ENCODE measurements at regions of chr2 and their contacts with region 1.

Region 1: GRCh38 chr2:17830053-17831034 is 14.1 kb downstream of the MSGN1 start:
- DNase-seq: peak; percentile 76
- ATAC-seq: peak; percentile 91
- H3K4me3 ChIP-seq: peak overlapping the region in 4 of 5 experiments; percentile 13 to 59 (median 33)
- H3K4me3 Mint-ChIP-seq: peak overlapping the region; percentile 70
- H3K27ac ChIP-seq: no peak overlapping the region
- H3K27ac Mint-ChIP-seq: peak overlapping the region; percentile 50
- H3K4me1 ChIP-seq: peaks cover 17 to 20% of the 10 kb centered on the region in 2 donors
- H3K4me1 Mint-ChIP-seq: peaks cover 34% of the 10 kb centered on the region
- H3K27me3 ChIP-seq: peaks cover 0 to 3% (median 0%) of the 10 kb centered on the region in 4 experiments
- H3K27me3 Mint-ChIP-seq: no peaks in the 10 kb centered on the region
- CTCF ChIP-seq: peak; percentile 97

Region 2: DNA sequence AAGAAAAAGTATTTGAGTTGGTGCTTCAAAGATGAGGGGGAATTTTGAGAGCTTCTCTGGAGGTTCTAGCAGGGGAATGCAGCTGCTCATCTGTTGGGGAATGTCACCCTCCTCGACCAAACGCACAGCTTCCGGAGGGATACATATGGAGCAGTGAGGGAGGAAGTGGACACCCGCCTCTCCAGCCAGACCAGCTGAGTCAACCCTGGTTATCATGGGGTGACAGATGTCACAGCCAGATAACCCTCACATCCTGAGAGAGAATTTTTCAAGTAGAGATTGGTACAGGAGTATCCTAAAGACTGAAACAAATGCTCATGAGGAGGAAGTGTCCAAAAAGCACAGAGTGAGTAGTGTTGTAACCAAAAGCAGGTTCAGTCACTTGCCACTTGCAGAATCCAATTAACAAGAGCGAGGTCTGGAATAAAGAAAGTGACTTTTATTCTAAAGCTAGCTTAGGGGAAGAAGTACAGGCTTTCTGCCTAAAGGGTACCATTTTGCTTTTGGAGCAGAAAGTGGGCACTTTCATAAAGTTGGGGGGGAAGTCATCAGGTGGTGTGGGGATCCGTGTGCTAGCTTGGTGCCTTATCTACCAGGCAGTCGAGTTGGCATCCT is 707.4 kb before region 1 on chr2:
- CTCF ChIA-PET with region 1: no interaction called
- POLR2A ChIA-PET with region 1: no interaction called
- intact Hi-C with region 1: loop called (anchors 10 kb)
- DNase-seq: no peak
- ATAC-seq: peak; percentile 39
- H3K4me3 ChIP-seq: no peak overlapping the region
- H3K4me3 Mint-ChIP-seq: no peak overlapping the region
- H3K27ac ChIP-seq: no peak overlapping the region
- H3K27ac Mint-ChIP-seq: peak overlapping the region; percentile 57
- H3K4me1 ChIP-seq: peaks cover 32 to 38% of the 10 kb centered on the region in 2 donors
- H3K4me1 Mint-ChIP-seq: peaks cover 6% of the 10 kb centered on the region
- H3K27me3 ChIP-seq: no peaks in the 10 kb centered on the region
- H3K27me3 Mint-ChIP-seq: no peaks in the 10 kb centered on the region
- CTCF ChIP-seq: no peak

Region 3: DNA sequence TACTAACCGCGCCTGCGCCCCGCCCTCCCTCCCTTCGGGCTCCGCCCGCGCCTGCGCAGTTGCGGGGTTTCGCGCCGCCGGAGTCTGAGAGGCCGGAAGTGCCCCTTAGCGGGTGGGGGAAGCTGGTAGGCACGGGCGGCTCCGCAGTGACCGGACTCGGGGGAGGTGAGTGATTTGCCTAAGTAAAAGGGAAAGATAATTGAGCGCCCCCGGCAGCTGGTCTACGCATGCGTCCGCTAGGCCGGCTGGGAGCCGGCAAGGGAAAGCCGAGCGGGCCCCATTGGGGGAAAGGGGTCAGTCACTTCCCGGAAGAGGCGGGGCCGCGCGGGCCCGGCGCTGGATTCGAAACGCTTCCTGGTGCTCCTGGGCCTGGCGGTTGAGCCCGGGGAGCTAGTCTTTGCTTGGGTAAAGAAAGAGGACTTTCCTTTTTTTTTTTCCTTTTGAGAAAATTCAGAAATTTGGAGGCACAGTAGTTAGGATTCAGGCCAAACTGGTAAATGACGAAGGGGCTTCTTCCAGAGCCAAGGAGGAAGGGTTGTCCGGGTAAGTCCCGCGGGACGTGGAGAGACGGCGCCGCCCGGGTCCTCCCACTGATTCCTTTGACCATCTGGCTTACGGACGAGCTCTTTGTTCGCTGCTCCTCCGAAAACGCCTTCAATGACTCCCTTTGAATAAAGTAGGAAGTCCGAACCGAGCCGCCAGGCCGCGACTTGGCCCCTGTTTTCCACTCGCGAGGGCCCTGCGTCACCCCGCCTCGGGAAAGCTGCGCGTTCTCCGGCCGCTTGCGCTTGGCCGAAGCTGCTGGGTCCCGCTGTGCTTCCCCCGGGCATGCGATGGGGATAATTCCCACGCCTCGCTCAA is 76.3 kb before region 1 on chr2 and contains the starts of genes GEN1 and SMC6:
- CTCF ChIA-PET with region 1: interaction called, 8 read pairs
- POLR2A ChIA-PET with region 1: no interaction called
- intact Hi-C with region 1: loop called (anchors 1 kb)
- DNase-seq: peak; percentile 97
- ATAC-seq: peak; percentile 80
- H3K4me3 ChIP-seq: peak within 1 kb of the TSS; percentile 86 to 93 (median 92)
- H3K4me3 Mint-ChIP-seq: peak within 1 kb of the TSS; percentile 81
- H3K27ac ChIP-seq: peak within 1 kb of the TSS; percentile 94 to 96
- H3K27ac Mint-ChIP-seq: peak within 1 kb of the TSS; percentile 87
- H3K4me1 ChIP-seq: peaks cover 34 to 36% of the 10 kb centered on the region in 2 donors
- H3K4me1 Mint-ChIP-seq: peaks cover 52% of the 10 kb centered on the region
- H3K27me3 ChIP-seq: no peaks in the 10 kb centered on the region
- H3K27me3 Mint-ChIP-seq: no peaks in the 10 kb centered on the region
- CTCF ChIP-seq: no peak
- total RNA-seq, gene GEN1: 105 and 111 TPM in 2 replicates
- total RNA-seq, gene SMC6: 111 and 124 TPM in 2 replicates

Region 4: GRCh38 chr2:17780546-17780945 is 49.8 kb before region 1 on chr2:
- CTCF ChIA-PET with region 1: interaction called, 16 read pairs
- POLR2A ChIA-PET with region 1: no interaction called
- intact Hi-C with region 1: no loop called
- DNase-seq: no peak
- ATAC-seq: no peak
- H3K4me3 ChIP-seq: no peak overlapping the region
- H3K4me3 Mint-ChIP-seq: no peak overlapping the region
- H3K27ac ChIP-seq: no peak overlapping the region
- H3K27ac Mint-ChIP-seq: no peak overlapping the region
- H3K4me1 ChIP-seq: no peaks in the 10 kb centered on the region
- H3K4me1 Mint-ChIP-seq: no peaks in the 10 kb centered on the region
- H3K27me3 ChIP-seq: no peaks in the 10 kb centered on the region
- H3K27me3 Mint-ChIP-seq: no peaks in the 10 kb centered on the region
- CTCF ChIP-seq: no peak

Region 5: DNA sequence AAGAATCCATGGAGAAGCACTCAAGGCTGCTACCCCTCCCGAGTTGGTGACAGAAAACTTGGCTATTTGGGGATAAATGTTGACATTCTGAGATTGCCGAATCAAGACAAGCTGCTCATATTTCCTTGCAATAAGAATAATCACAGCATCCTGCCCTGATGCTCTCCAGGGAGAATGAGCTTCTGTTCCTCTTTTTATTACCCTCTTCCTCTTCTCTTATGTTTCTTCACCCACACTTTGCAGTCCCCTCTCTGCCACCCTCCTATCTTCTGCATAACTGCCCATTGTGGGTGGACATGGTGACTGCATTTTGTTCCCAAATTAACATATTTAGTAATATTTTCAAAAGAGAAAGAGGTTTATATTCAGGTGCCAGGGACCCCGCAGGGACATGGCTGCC is 26.0 kb before region 1 on chr2:
- CTCF ChIA-PET with region 1: interaction called, 22 read pairs
- POLR2A ChIA-PET with region 1: interaction called, 6 read pairs
- intact Hi-C with region 1: loop called (anchors 2 kb)
- DNase-seq: peak; percentile 78
- ATAC-seq: peak; percentile 83
- H3K4me3 ChIP-seq: peak overlapping the region in 2 of 5 experiments; percentile 31 to 34
- H3K4me3 Mint-ChIP-seq: peak overlapping the region; percentile 81
- H3K27ac ChIP-seq: peak overlapping the region; percentile 82 to 93
- H3K27ac Mint-ChIP-seq: peak overlapping the region; percentile 87
- H3K4me1 ChIP-seq: peaks cover 43 to 52% of the 10 kb centered on the region in 2 donors
- H3K4me1 Mint-ChIP-seq: peaks cover 70% of the 10 kb centered on the region
- H3K27me3 ChIP-seq: no peaks in the 10 kb centered on the region
- H3K27me3 Mint-ChIP-seq: no peaks in the 10 kb centered on the region
- CTCF ChIP-seq: no peak

Region 6: DNA sequence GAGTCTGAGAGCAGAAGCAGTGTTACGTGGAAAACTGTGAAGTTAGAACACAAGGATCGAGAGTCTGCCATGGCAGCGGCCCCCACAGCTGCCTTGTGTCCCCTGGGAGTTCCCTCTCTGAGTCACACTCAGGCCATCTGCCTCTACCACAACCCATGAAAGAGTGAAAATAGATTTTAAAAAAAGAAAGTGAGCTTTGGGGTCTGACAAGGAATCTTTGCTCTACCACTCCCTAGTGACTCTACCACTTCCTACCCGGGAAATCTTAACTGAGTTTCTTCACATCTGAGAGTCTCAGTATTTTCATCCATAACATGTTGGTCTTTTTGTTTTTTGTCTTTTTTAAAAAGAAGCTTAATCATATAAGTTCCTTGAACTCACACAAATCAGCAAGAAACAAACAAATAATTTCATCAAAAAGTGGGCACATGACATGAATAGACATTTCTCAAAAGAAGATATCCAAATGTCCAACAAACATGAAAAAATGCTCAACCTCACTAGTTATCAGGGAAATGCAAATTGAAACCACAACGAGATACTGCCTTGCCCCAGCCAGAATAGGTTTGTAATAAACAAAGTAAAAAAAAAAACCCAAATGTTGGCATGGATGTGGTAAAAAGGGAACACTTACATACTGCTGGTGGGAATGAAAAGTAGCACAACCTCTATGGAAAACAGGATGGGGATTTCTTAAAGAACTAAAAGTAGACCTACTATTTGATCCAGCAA is 16.4 kb before region 1 on chr2:
- CTCF ChIA-PET with region 1: interaction called, 15 read pairs
- POLR2A ChIA-PET with region 1: no interaction called
- intact Hi-C with region 1: loop called (anchors 1 kb)
- DNase-seq: peak; percentile 74
- ATAC-seq: peak; percentile 80
- H3K4me3 ChIP-seq: peak overlapping the region in 1 of 5 experiments; percentile 27
- H3K4me3 Mint-ChIP-seq: peak overlapping the region; percentile 81
- H3K27ac ChIP-seq: peak overlapping the region; percentile 84 to 90
- H3K27ac Mint-ChIP-seq: peak overlapping the region; percentile 92
- H3K4me1 ChIP-seq: peaks cover 30 to 35% of the 10 kb centered on the region in 2 donors
- H3K4me1 Mint-ChIP-seq: peaks cover 60% of the 10 kb centered on the region
- H3K27me3 ChIP-seq: no peaks in the 10 kb centered on the region
- H3K27me3 Mint-ChIP-seq: no peaks in the 10 kb centered on the region
- CTCF ChIP-seq: no peak

Region 7: DNA sequence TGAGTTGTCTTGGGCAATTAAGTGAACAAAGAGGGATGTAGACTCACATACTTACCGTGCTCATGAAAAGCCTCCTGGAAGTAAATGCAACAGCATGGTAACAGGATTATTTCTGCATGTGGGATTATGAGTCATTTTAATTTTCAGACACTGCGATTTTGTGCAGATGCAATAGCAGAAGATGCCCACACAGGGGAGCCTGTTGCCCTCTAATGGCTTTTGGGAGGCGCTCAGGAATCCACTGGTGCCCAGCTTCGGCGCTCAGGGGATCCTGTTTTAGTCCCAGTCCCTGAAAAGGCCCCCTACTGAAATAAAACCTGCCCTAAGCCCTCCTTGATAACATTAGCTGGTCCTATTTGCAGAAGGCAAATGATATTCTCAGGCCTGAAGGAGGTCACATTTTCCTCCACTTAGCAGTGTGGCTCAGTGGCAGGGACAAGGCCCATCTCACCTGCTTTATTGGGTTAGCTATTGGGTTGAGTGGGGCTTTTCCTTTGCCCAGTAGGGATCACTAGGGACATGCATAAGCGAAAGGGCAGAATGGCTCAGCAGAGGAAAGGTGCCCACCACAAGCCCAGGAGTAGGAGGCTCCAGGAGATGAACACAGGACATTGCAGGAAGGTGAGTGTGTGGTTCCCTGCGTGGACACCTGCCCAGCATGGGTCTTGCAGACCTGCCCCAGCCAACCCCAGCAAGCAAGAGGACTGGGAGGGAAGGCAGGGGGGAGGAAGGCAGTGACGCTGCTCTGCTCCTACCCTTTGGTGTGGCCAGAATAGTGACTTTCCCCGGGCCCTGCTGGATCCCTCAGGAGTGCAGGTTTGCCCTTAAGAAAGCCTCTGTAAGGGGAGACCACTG is 21.6 kb after region 1 on chr2:
- CTCF ChIA-PET with region 1: interaction called, 29 read pairs
- POLR2A ChIA-PET with region 1: no interaction called
- intact Hi-C with region 1: no loop called
- DNase-seq: peak; percentile 51
- ATAC-seq: peak; percentile 69
- H3K4me3 ChIP-seq: no peak overlapping the region
- H3K4me3 Mint-ChIP-seq: no peak overlapping the region
- H3K27ac ChIP-seq: no peak overlapping the region
- H3K27ac Mint-ChIP-seq: no peak overlapping the region
- H3K4me1 ChIP-seq: peaks cover 0 to 5% of the 10 kb centered on the region in 2 donors
- H3K4me1 Mint-ChIP-seq: peaks cover 5% of the 10 kb centered on the region
- H3K27me3 ChIP-seq: peaks cover 0 to under 1% (median 0%) of the 10 kb centered on the region in 4 experiments
- H3K27me3 Mint-ChIP-seq: peaks cover 3% of the 10 kb centered on the region
- CTCF ChIP-seq: peak; percentile 81

Region 8: DNA sequence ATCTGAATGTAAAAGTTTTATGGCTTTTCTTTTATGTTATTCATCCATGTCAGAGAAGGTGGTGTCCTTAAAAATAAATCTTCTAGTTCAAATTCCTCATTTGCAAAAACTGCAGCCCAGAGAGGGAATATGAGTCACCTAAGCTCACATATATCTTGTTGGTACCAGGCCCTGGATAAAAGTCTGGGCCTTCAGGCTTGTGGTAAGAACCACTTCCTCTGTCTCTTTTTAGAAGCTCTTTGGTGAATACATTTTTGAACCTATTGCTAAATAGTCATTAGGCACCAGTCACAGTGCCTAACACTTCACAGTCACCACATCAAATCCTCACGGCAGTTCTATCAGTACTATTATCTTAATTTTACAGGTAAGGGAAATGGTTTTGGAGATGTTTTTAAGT is 247.4 kb after region 1 on chr2:
- CTCF ChIA-PET with region 1: no interaction called
- POLR2A ChIA-PET with region 1: no interaction called
- intact Hi-C with region 1: no loop called
- DNase-seq: no peak
- ATAC-seq: no peak
- H3K4me3 ChIP-seq: no peak overlapping the region
- H3K4me3 Mint-ChIP-seq: no peak overlapping the region
- H3K27ac ChIP-seq: no peak overlapping the region
- H3K27ac Mint-ChIP-seq: no peak overlapping the region
- H3K4me1 ChIP-seq: no peaks in the 10 kb centered on the region
- H3K4me1 Mint-ChIP-seq: no peaks in the 10 kb centered on the region
- H3K27me3 ChIP-seq: no peaks in the 10 kb centered on the region
- H3K27me3 Mint-ChIP-seq: peaks cover 4% of the 10 kb centered on the region
- CTCF ChIP-seq: no peak

Region 9: DNA sequence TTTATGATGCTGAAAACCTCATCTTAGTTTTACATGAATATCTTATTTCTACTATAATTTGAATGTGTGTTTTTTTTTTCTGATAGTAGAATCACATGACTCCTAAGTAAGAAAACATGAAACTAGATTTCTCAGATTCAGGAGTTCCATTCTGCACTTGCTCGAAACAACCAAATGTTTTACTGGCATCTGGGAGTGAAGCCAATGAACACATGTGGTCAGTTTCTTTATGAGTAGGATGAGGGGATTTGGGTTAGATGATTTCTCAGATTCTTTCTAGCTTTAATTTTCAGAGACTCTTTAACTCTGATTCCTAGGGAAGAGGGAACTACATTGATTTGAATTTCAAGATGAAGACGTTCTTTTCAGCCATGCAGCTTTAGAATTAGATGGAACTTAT is 984.0 kb after region 1 on chr2:
- CTCF ChIA-PET with region 1: no interaction called
- POLR2A ChIA-PET with region 1: no interaction called
- intact Hi-C with region 1: no loop called
- DNase-seq: no peak
- ATAC-seq: no peak
- H3K4me3 ChIP-seq: no peak overlapping the region
- H3K4me3 Mint-ChIP-seq: no peak overlapping the region
- H3K27ac ChIP-seq: no peak overlapping the region
- H3K27ac Mint-ChIP-seq: no peak overlapping the region
- H3K4me1 ChIP-seq: no peaks in the 10 kb centered on the region
- H3K4me1 Mint-ChIP-seq: no peaks in the 10 kb centered on the region
- H3K27me3 ChIP-seq: no peaks in the 10 kb centered on the region
- H3K27me3 Mint-ChIP-seq: no peaks in the 10 kb centered on the region
- CTCF ChIP-seq: no peak

Measured in B cell (primary cell).